Left colon (tissue), 2 donors: ENCODE measurements at regions of chr17 and their contacts with region 1.

Region 1: DNA sequence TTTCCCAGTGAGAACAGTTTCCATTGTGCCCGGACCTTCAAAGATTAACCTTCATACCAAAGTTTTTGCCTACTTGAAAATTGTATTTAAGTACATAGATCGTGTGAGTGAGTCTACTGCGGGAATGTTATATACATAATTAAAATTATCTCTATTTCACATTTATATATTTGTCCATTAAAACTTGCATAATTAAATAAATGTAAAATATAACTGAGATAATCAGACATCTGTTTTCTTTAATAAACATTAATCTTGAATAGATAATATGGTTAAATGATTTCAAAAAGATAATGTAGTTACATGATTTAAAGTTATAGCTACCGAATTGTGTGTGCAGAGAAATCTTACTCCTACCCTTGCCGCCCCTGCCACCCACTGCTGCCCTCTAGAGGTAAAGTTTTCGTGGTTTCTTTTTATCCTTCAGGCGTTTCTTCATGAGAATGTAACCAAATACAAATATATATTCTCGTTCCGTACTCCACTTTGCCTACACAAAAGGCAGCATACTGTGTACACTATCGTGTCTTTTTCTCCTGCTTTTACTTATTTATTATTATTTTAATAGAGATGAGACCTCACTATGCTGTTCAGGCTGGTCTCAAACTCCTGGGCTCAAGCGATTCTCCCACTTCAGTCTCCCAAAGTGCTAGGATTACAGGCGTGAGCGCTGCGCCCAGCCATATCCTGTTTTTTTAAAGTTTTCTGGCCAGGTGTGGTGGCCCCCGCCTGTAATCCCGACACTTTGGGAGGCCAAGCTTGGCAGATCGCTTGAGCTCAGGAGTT is 35.6 kb downstream of the RPA1 start:
- DNase-seq: peak in 1 of 2 donors; percentile 34
- ATAC-seq: peak; percentile 69

Region 2: DNA sequence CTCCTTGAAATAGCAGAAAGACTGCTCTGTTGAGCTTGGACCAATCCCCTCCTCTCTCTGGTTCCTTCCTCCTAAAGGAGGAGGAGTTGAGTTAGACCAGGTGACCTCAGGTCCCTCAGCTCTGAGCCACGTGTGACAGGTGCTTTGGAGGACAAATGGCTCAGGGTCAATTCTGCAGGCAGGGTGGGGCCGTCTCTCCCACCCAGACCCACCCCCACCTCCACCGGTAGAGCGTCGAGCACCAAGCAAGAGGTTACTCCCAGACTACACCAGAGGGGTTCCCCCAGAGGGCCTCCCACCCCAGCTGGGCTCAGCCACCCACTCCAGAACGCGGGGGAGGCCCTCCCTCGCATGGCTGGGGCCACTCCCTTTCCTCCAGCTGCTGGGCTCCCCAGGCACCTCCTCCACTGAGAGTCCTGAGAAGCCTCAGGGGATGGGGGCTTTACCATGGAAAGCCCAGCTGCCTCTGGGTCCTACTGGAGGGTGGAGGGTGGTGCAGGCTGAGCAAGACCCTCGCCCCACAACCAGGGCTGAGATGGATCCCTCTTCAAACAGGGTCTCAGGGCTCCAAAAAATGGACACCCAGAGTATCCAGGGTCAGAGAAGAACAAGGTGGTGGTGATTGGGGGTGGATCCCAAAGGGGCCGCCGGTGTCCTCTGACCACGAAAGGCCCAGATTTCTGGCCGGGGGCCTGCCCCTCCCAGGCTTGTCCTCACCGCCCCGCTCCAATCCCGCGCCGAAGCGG is 380.6 kb before region 1 on chr17:
- intact Hi-C with region 1: no loop called
- DNase-seq: peak; percentile 72 to 84
- ATAC-seq: peak; percentile 54

Region 3: DNA sequence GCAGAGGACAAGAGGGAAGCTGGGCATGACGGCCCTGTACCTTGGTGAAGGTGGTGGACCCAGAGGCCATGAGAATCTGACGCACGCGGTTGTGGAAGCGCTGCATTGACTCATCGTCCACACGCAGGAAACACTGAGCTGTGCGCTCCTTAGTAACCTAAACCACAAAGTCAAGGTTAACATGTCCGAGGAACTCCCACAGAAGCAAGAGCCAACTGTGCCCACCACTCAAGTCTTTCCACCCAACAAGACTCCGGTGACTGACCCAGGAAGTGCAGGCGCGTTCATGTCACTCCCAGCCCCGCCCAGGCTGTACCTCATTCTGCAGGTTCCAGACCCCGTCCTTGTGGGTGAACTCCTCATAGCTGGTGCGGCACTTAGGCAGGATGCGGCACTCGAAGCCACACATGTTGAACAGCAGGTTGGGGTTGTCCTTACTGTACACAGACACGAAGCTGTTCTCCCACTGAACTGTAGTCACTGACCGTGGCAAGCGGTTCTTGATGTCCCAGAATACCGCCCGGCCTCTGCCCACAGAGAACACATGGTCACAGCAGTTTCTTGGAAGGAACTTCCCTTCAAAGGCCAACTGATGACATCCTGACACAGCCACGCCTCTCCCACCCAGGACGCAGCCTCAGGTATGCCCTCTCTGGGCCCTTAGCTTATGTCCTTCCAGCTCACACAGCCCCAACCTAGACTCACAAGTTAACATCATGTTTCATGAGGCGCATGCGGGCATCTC is 192.2 kb before region 1 on chr17:
- intact Hi-C with region 1: loop called in 1 of 2 experiments (anchors 10 kb)
- DNase-seq: no peak
- ATAC-seq: no peak

Region 4: GRCh38 chr17:1779571-1780131 is 85.8 kb before region 1 on chr17:
- intact Hi-C with region 1: no loop called
- DNase-seq: peak; percentile 53 to 54
- ATAC-seq: peak; percentile 88

Region 5: GRCh38 chr17:1939981-1940809 is 74.8 kb after region 1 on chr17:
- intact Hi-C with region 1: no loop called
- DNase-seq: peak in 1 of 2 donors; percentile 22
- ATAC-seq: peak; percentile 60

Region 6: GRCh38 chr17:1997927-1998784 is 132.7 kb after region 1 on chr17:
- intact Hi-C with region 1: no loop called
- DNase-seq: peak; percentile 63 to 88
- ATAC-seq: peak; percentile 82